GM12878 (cell line): ENCODE measurements at regions of chr17 and their contacts with region 1.

Region 1: DNA sequence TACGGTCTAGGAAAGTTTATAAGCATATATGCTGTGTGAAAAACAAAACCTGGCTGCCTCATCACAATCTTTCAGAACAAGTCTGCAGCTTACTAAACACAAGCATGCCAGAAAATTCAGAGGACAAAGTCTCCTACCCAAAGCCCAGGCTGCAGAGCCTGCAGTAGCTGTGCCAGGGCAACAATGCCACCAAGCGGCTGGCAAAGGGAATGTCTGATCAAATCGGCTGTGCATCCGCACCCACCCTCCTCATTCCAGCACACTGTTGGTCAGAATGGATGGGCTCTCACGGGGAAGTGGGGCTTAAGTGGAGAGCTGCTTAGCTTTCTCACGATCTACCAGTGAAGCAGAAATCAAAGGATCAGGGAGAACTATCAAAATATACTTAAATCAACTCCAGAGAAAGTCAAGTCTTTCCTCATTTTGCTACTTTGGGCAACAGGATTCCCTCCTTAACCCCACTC is 73.5 kb downstream of the CYTH1 start:
- DNase-seq: no peak
- ATAC-seq: peak; percentile 75
- H3K4me3 ChIP-seq: peak overlapping the region; percentile 24; the same call in 1 of the 2 replicates
- H3K27ac ChIP-seq: peak overlapping the region; percentile 99
- H3K4me1 ChIP-seq: peaks cover 60% of the 10 kb centered on the region
- H3K27me3 ChIP-seq: no peaks in the 10 kb centered on the region
- CTCF ChIP-seq: peak; percentile 81 to 87 (median 87)
- EP300 ChIP-seq: no peak
- POLR2A ChIP-seq: 0 out of 2 replicates have a peak, but pooled peaks have one; percentile 29
- RAD21 ChIP-seq: peak; percentile 88

Region 2: DNA sequence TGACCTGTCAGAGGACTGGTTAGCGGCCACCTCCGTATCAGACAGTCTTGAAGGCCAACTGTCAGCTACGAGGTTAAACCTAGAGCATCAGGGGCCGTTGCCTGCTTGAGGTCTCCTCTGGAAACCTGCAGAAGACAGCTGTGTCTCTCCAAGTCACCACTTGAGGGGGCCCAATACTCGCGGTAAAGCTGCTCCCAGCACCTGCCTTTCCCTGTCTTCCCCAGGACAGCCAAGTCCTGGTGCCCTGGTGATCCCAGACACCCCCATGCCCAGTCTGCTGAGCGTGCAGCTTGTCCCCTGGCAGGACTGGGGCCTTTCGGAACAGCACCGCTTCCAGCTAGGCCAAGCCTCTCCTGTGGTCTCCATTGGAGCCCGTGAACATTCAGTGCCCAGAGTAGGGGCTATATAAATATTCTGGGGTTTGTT is 211.4 kb before region 1 on chr17:
- CTCF ChIA-PET with region 1: interaction called, 46 read pairs
- POLR2A ChIA-PET with region 1: interaction called, 4 read pairs
- RAD21 ChIA-PET with region 1: interaction called, 9 read pairs
- SMC1A ChIA-PET with region 1: interaction called, 19 read pairs
- in situ Hi-C with region 1: no loop called
- intact Hi-C with region 1: loop called (anchors 1 kb)
- DNase-seq: no peak
- ATAC-seq: peak; percentile 96
- H3K4me3 ChIP-seq: no peak overlapping the region
- H3K27ac ChIP-seq: no peak overlapping the region
- H3K4me1 ChIP-seq: no peaks in the 10 kb centered on the region; the same call in 1 of the 2 replicates
- H3K27me3 ChIP-seq: no peaks in the 10 kb centered on the region
- CTCF ChIP-seq: peak; percentile 81 to 94 (median 86)
- EP300 ChIP-seq: no peak
- POLR2A ChIP-seq: no peak
- RAD21 ChIP-seq: peak; percentile 84

Region 3: DNA sequence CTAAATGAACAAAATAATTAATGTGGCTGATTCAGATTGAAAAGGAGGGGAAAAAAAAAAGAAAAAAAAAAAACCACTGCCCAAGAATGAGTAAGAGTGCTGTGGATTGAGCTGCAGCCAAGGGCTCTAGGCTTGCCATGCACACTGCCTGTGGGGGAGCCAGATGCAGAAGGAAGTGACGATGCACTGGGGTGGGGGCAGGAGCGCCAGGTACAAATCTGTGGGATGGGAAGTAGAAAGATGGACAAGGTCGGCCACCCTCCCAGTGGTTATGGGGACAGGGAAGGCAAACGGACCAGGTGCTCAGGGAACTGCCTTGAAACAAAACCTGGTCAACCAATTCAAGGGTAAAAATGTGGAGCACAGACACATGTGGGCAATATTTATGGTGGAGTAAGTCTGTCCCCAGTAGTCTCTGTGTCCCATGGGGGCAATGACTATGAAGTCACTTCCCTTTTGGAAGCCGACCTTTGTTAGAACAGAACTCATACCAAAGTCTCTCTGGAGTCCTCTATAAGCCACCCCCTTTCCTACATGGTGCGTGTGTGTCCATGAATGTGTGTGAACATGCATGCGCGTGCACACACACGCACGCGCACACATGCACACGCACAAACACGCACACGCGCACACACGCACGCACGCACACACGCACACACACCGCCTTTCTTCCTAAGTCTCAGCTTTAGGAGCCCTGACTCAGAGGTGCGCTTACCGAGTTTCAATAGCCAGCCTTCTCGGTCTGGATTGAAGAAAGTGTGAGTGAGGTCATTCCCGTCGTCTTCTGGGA is 10.8 kb before region 1 on chr17:
- CTCF ChIA-PET with region 1: interaction called, 69 read pairs
- POLR2A ChIA-PET with region 1: interaction called, 31 read pairs
- RAD21 ChIA-PET with region 1: interaction called, 52 read pairs
- SMC1A ChIA-PET with region 1: interaction called, 98 read pairs
- in situ Hi-C with region 1: no loop called
- intact Hi-C with region 1: no loop called
- DNase-seq: no peak
- ATAC-seq: peak; percentile 67
- H3K4me3 ChIP-seq: peak overlapping the region; percentile 25; the same call in 1 of the 2 replicates
- H3K27ac ChIP-seq: peak overlapping the region; percentile 97
- H3K4me1 ChIP-seq: peaks cover 55% of the 10 kb centered on the region
- H3K27me3 ChIP-seq: no peaks in the 10 kb centered on the region
- CTCF ChIP-seq: no peak
- EP300 ChIP-seq: no peak
- POLR2A ChIP-seq: peak; percentile 66
- RAD21 ChIP-seq: no peak

Region 4: DNA sequence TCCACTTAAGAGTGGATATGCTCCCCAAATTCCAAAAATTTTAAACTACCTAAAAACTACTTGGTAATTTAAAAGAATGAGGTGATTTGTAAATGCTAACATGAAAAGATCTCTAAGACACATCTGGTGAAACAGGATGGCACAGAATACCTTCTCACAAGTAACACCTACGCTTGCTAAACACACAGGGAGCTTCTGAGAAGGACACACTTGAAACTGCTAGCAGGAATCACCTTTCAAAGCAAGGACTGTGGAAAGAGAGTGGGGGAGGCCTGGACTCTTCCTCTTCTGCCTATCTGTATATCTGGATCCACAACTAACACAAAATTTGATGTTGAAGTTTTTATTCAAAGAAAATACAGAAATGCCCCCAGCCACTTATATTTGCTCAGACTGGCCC is 21.1 kb after region 1 on chr17:
- CTCF ChIA-PET with region 1: interaction called, 85 read pairs
- POLR2A ChIA-PET with region 1: interaction called, 384 read pairs
- RAD21 ChIA-PET with region 1: interaction called, 537 read pairs
- SMC1A ChIA-PET with region 1: interaction called, 490 read pairs
- in situ Hi-C with region 1: no loop called
- intact Hi-C with region 1: no loop called
- DNase-seq: no peak
- ATAC-seq: 0 out of 3 replicates have a peak, but pooled peaks have one; percentile 4
- H3K4me3 ChIP-seq: peak overlapping the region; percentile 67
- H3K27ac ChIP-seq: peak overlapping the region; percentile 74
- H3K4me1 ChIP-seq: peaks cover 55% of the 10 kb centered on the region
- H3K27me3 ChIP-seq: no peaks in the 10 kb centered on the region
- CTCF ChIP-seq: no peak
- EP300 ChIP-seq: no peak
- POLR2A ChIP-seq: no peak
- RAD21 ChIP-seq: no peak

Region 5: GRCh38 chr17:78745407-78746088 is 37.0 kb after region 1 on chr17:
- CTCF ChIA-PET with region 1: interaction called, 56 read pairs
- POLR2A ChIA-PET with region 1: interaction called, 384 read pairs
- RAD21 ChIA-PET with region 1: interaction called, 537 read pairs
- SMC1A ChIA-PET with region 1: interaction called, 490 read pairs
- in situ Hi-C with region 1: no loop called
- intact Hi-C with region 1: no loop called
- DNase-seq: no peak
- ATAC-seq: no peak
- H3K4me3 ChIP-seq: no peak overlapping the region
- H3K27ac ChIP-seq: 0 out of 2 replicates have a peak overlapping the region, but pooled peaks have one; percentile 20
- H3K4me1 ChIP-seq: peaks cover 72% of the 10 kb centered on the region
- H3K27me3 ChIP-seq: no peaks in the 10 kb centered on the region
- CTCF ChIP-seq: peak; percentile 35 to 51 (median 42); a peak in 4 of 6 replicates
- EP300 ChIP-seq: no peak
- POLR2A ChIP-seq: no peak
- RAD21 ChIP-seq: peak; percentile 55

Region 6: DNA sequence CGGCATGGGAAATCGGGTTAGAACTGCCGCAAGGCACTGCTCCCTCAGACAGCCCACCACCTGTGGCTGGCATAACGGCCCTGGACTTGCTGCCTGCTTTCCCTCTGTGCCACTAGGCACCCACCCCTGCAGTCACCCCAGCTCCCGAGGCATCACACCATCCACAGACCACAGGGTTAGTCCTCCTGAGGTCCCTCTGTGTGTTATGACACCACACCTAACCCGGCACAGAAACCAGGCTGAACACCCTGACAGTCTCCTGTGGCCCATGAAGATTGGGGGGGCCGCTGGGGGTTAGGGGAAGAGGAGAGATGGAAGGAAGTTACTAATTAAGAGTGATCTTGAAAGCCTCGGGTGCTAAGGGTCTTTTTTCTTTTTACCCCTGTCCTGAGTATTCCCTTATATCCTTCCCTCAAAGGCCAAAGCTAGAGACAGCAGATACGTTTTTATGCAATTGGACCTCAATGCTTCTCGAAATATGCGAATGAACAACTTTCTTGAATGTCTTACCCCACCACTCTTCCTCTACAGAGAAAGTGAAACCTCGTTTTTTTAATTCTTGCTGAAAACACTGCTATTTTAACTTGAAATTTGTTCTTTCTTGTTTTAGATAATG is 66.5 kb after region 1 on chr17:
- CTCF ChIA-PET with region 1: interaction called, 5 read pairs
- POLR2A ChIA-PET with region 1: interaction called, 11 read pairs
- RAD21 ChIA-PET with region 1: interaction called, 17 read pairs
- SMC1A ChIA-PET with region 1: interaction called, 11 read pairs
- in situ Hi-C with region 1: no loop called
- intact Hi-C with region 1: loop called (anchors 2 kb)
- DNase-seq: no peak
- ATAC-seq: peak; percentile 69
- H3K4me3 ChIP-seq: peak overlapping the region; percentile 68
- H3K27ac ChIP-seq: peak overlapping the region; percentile 97
- H3K4me1 ChIP-seq: peaks cover 43% of the 10 kb centered on the region
- H3K27me3 ChIP-seq: no peaks in the 10 kb centered on the region
- CTCF ChIP-seq: no peak
- EP300 ChIP-seq: peak in 1 of 2 experiments; percentile 44; a peak in 2 of 4 replicates
- POLR2A ChIP-seq: peak; percentile 81
- RAD21 ChIP-seq: no peak